CD4-positive, alpha-beta T cell (primary cell): ENCODE measurements at regions of chr2 and their contacts with region 1.

Region 1: DNA sequence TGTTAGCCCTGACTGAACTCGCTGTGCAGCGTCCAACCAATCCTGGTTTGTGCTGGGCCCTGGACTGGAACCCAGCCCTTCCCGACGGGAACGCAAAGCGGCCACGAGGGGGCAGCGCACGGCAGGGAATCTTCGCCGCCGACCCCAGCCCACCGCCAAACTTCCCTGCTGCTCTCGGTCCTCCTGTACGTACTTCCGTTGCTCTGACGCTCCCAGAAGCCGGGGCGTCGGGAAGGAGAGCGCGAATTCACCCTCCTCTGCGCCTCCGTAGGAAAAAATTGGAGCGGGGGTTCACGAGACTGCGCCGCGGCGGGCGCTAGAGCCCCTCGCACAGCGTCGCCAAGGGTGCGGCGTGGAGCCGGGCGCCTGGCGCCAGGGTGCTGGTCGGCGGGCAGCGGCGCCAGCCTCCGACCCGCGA is 948 bp upstream of the SH3RF3 start:
- DNase-seq: peak; percentile 44 to 82 (median 58)
- ATAC-seq: peak; percentile 65
- H3K4me3 ChIP-seq: peak overlapping the region; percentile 73
- H3K4me3 Mint-ChIP-seq: peak overlapping the region; percentile 78
- H3K27ac ChIP-seq: no peak overlapping the region
- H3K27ac Mint-ChIP-seq: peak overlapping the region; percentile 57
- H3K4me1 ChIP-seq: peaks cover 29% of the 10 kb centered on the region
- H3K4me1 Mint-ChIP-seq: peaks cover 40% of the 10 kb centered on the region
- H3K27me3 ChIP-seq: peaks cover 4 to 19% of the 10 kb centered on the region in 2 experiments
- H3K27me3 Mint-ChIP-seq: peaks cover 4% of the 10 kb centered on the region
- CTCF ChIP-seq: peak; percentile 83

Region 2: GRCh38 chr2:108786354-108787199 is 341.5 kb before region 1 on chr2 and contains the start of gene CCDC138:
- CTCF ChIA-PET with region 1: no interaction called
- POLR2A ChIA-PET with region 1: no interaction called
- intact Hi-C with region 1: loop called in 1 of 2 experiments (anchors 10 kb)
- DNase-seq: peak; percentile 83 to 96 (median 90)
- ATAC-seq: peak; percentile 95
- H3K4me3 ChIP-seq: peak within 1 kb of the TSS; percentile 78
- H3K4me3 Mint-ChIP-seq: peak within 1 kb of the TSS; percentile 99
- H3K27ac ChIP-seq: peak within 1 kb of the TSS; percentile 33 to 63
- H3K27ac Mint-ChIP-seq: peak within 1 kb of the TSS; percentile 92
- H3K4me1 ChIP-seq: peaks cover 8% of the 10 kb centered on the region
- H3K4me1 Mint-ChIP-seq: peaks cover 22% of the 10 kb centered on the region
- H3K27me3 ChIP-seq: no peaks in the 10 kb centered on the region
- H3K27me3 Mint-ChIP-seq: no peaks in the 10 kb centered on the region
- CTCF ChIP-seq: no peak
- total RNA-seq, gene CCDC138: 4.7 to 5.8 TPM

Region 3: GRCh38 chr2:108927936-108928659 is 200.0 kb before region 1 on chr2:
- CTCF ChIA-PET with region 1: no interaction called
- POLR2A ChIA-PET with region 1: no interaction called
- intact Hi-C with region 1: loop called in 1 of 2 experiments (anchors 5 kb)
- DNase-seq: peak in 13 of 14 experiments; percentile 8 to 72 (median 32)
- ATAC-seq: peak; percentile 73
- H3K4me3 ChIP-seq: no peak overlapping the region
- H3K4me3 Mint-ChIP-seq: no peak overlapping the region
- H3K27ac ChIP-seq: no peak overlapping the region
- H3K27ac Mint-ChIP-seq: no peak overlapping the region
- H3K4me1 ChIP-seq: peaks cover 6% of the 10 kb centered on the region
- H3K4me1 Mint-ChIP-seq: peaks cover 13% of the 10 kb centered on the region
- H3K27me3 ChIP-seq: no peaks in the 10 kb centered on the region
- H3K27me3 Mint-ChIP-seq: no peaks in the 10 kb centered on the region
- CTCF ChIP-seq: peak; percentile 82

Region 4: GRCh38 chr2:109143214-109144187 is 15.4 kb after region 1 on chr2:
- CTCF ChIA-PET with region 1: interaction called, 3 read pairs
- POLR2A ChIA-PET with region 1: interaction called, 5 read pairs
- intact Hi-C with region 1: loop called in 1 of 2 experiments (anchors 1 kb)
- DNase-seq: peak; percentile 25 to 83 (median 55)
- ATAC-seq: peak; percentile 78
- H3K4me3 ChIP-seq: peak overlapping the region; percentile 14
- H3K4me3 Mint-ChIP-seq: peak overlapping the region; percentile 53
- H3K27ac ChIP-seq: no peak overlapping the region
- H3K27ac Mint-ChIP-seq: peak overlapping the region; percentile 81
- H3K4me1 ChIP-seq: peaks cover 24% of the 10 kb centered on the region
- H3K4me1 Mint-ChIP-seq: peaks cover 52% of the 10 kb centered on the region
- H3K27me3 ChIP-seq: no peaks in the 10 kb centered on the region
- H3K27me3 Mint-ChIP-seq: no peaks in the 10 kb centered on the region
- CTCF ChIP-seq: no peak

Region 5: DNA sequence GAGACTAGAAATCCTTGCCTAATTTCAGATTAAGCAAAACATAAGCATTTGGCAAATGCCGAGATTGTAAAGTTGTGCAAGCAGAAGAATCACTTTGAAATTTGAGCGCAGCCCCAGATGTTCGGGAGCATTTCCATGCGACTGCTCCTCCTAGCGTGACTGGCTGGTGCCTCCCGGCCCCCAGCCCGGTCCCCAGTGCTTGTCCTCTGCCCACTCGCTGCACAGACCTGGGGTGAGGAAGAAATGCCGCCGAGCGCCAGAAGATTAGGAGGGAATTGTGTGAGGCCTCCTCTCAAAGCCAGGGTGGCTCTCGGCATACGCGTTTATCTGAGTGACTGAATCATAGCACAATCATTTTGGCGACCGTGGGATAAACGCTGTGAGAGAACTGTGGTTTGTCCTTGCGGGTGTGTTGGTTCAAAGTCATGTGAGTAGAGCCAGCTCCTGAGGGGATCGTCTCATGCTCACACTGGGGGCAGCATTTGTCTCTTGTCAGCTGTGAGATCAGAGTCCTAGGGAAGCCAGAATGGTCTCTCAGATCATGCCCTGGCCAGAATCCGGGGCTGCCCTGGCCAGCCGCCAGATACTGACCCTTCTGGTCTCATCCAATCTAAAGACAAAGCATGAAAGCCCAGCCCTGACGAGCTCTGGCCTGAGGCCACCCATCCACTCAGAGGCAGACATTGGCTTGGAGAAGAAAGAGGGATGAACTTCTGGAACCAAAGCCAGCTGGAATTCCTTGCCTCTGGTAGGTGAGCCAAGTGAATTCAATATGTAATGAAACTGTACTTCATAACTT is 190.3 kb after region 1 on chr2:
- CTCF ChIA-PET with region 1: no interaction called
- POLR2A ChIA-PET with region 1: no interaction called
- intact Hi-C with region 1: no loop called
- DNase-seq: no peak
- ATAC-seq: no peak
- H3K4me3 ChIP-seq: no peak overlapping the region
- H3K4me3 Mint-ChIP-seq: no peak overlapping the region
- H3K27ac ChIP-seq: no peak overlapping the region
- H3K27ac Mint-ChIP-seq: no peak overlapping the region
- H3K4me1 ChIP-seq: peaks cover 10% of the 10 kb centered on the region
- H3K4me1 Mint-ChIP-seq: peaks cover 35% of the 10 kb centered on the region
- H3K27me3 ChIP-seq: no peaks in the 10 kb centered on the region
- H3K27me3 Mint-ChIP-seq: no peaks in the 10 kb centered on the region
- CTCF ChIP-seq: no peak

Region 6: DNA sequence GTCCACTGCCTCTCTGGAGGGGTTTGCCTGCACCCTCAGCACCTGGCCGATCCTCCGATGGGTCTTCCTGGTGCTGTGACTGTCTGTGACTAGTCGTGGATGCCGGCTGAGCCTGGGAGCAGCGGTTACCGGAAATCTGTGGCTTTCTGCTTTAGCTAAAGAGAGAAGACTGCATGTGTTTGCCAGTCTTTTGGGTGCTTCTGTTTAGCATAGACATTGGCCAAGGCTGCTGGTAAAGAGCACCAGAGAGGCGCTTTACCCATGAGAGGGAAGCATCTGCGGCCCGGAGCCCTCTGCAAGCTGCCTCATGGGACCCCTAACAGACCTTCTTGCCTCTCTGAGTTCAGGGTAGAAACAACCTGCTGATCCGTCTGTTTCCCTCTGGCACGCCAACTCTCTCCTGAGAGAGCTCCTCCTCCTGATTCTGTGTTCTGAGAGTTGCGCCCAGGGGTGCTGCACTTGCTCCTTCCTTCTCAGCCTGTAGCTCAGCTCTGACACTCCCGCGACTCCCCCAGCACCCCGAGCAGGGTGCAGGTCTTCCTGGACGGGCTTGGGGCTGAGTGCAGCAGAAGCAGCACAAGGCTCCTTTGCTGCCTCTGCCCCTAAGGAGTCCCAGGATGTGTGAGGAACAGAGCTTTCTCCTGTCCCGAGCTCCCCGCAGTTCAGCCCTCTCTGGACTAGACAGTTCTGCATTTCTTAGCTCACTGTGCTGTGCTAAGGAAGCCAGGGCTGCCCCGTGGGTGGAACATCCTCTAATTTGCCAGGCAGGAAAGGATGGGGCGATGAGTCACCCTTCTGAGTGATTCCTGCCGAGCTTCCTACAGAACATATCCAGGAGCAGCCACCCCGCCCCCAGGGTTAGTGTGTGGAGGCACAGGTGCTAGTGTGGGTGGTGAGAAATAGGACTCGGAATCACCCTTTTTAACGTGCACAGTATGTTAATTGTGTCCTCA is 204.1 kb after region 1 on chr2:
- CTCF ChIA-PET with region 1: no interaction called
- POLR2A ChIA-PET with region 1: interaction called, 3 read pairs
- intact Hi-C with region 1: loop called in 1 of 2 experiments (anchors 5 kb)
- DNase-seq: peak in 6 of 14 experiments; percentile 15 to 50 (median 42)
- ATAC-seq: peak; percentile 67
- H3K4me3 ChIP-seq: peak overlapping the region; percentile 36
- H3K4me3 Mint-ChIP-seq: peak overlapping the region; percentile 74
- H3K27ac ChIP-seq: no peak overlapping the region
- H3K27ac Mint-ChIP-seq: peak overlapping the region; percentile 21
- H3K4me1 ChIP-seq: peaks cover 30% of the 10 kb centered on the region
- H3K4me1 Mint-ChIP-seq: peaks cover 48% of the 10 kb centered on the region
- H3K27me3 ChIP-seq: no peaks in the 10 kb centered on the region
- H3K27me3 Mint-ChIP-seq: no peaks in the 10 kb centered on the region
- CTCF ChIP-seq: no peak

Region 7: DNA sequence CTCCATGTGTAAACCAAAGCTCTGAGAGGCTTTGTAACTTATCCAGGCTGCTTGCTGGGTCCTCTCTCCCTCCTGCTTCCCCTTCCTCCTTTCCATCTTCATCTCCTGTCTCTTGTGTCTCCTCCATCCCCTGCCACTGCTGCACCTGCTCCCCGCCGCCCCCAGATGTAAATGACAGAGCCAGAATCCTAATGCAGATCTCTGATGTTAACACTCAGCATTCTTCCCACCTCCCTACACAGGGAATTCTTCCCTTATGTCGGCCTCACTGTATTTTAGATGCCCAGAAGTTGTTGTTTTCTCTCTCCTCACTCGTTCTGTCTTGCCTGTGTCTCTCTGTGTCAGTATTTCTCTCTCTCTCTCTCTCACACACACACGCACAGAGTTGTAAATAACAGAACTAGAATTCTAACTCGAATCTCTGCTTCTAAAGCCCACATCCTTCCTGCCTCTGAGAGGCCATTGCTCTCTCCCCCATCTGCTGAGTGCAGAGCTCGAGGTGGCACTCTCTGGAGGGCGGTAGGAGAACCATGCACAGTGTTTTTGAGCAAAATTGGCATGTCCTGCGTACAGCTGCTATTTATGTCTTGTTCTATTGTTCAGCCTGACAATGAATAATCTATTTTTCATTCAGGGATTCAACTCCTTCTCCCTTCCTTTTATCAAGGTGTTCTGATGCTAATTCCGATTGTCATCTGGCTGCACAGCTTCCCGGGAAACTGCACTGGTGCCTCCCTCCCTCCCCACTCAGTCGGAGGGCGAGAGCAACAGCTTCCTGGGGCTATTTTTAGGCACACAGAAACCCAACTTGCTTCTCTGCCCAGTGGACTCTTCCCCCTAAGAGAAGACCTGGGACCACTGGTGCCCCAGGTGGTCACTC is 220.9 kb after region 1 on chr2:
- CTCF ChIA-PET with region 1: no interaction called
- POLR2A ChIA-PET with region 1: interaction called, 11 read pairs
- intact Hi-C with region 1: loop called (anchors 1 to 2 kb)
- DNase-seq: peak; percentile 36 to 79 (median 56)
- ATAC-seq: peak; percentile 99
- H3K4me3 ChIP-seq: peak overlapping the region; percentile 19
- H3K4me3 Mint-ChIP-seq: peak overlapping the region; percentile 28
- H3K27ac ChIP-seq: peak overlapping the region; percentile 64 to 69
- H3K27ac Mint-ChIP-seq: peak overlapping the region; percentile 87
- H3K4me1 ChIP-seq: peaks cover 44% of the 10 kb centered on the region
- H3K4me1 Mint-ChIP-seq: peaks cover 50% of the 10 kb centered on the region
- H3K27me3 ChIP-seq: no peaks in the 10 kb centered on the region
- H3K27me3 Mint-ChIP-seq: no peaks in the 10 kb centered on the region
- CTCF ChIP-seq: no peak

Region 8: DNA sequence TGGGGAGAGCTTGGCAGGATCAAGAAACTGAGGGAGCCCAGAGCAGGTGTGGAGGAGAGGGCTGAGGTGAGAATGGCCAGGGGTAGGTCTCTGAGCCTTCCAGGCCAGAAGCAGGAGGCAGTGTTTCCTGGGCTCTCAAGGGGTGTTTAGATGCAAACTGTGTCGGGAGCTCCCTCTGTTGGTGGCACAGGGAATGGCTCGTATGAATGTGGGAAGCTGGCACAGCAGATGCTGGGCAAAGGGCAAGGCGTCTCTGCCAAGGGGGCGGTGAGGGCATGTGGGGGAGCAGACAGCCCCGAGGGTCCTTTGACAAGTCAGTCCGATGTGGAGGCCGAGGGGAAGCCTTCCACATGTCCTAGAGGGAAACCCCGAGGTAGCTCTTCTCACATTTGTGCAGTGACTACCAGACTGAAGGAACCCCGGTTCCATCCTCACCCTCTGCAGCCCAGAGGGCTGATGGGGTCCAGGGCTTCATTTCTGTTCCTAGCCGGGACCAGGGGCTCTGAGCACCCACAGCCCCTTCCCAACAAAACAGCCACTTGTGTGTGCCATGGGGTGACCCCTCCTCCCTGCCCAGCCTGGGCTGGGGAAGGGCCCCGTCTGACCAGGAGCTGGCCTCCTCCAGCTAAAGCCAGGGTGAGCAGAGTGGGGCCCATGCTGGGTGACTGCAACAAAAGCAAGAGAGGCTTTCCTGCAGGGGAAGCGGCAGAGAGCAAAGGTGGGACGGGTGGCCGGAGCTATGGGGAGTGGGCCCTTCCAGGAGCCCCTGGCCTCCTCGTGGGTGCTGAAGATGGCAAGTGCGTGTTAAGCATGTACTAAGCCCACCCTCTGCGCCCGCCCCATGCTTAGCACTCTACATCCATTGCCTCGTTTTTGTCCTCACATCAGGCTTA is 382.3 kb after region 1 on chr2:
- CTCF ChIA-PET with region 1: interaction called, 15 read pairs
- POLR2A ChIA-PET with region 1: interaction called, 4 read pairs
- intact Hi-C with region 1: loop called (anchors 1 kb)
- DNase-seq: peak; percentile 66 to 85 (median 72)
- ATAC-seq: peak; percentile 95
- H3K4me3 ChIP-seq: no peak overlapping the region
- H3K4me3 Mint-ChIP-seq: no peak overlapping the region
- H3K27ac ChIP-seq: no peak overlapping the region
- H3K27ac Mint-ChIP-seq: no peak overlapping the region
- H3K4me1 ChIP-seq: peaks cover 7% of the 10 kb centered on the region
- H3K4me1 Mint-ChIP-seq: no peaks in the 10 kb centered on the region
- H3K27me3 ChIP-seq: peaks cover 0 to 3% of the 10 kb centered on the region in 2 experiments
- H3K27me3 Mint-ChIP-seq: no peaks in the 10 kb centered on the region
- CTCF ChIP-seq: peak; percentile 82